A549 (cell line): ENCODE measurements at regions of chr17 and their contacts with region 1.

Region 1: DNA sequence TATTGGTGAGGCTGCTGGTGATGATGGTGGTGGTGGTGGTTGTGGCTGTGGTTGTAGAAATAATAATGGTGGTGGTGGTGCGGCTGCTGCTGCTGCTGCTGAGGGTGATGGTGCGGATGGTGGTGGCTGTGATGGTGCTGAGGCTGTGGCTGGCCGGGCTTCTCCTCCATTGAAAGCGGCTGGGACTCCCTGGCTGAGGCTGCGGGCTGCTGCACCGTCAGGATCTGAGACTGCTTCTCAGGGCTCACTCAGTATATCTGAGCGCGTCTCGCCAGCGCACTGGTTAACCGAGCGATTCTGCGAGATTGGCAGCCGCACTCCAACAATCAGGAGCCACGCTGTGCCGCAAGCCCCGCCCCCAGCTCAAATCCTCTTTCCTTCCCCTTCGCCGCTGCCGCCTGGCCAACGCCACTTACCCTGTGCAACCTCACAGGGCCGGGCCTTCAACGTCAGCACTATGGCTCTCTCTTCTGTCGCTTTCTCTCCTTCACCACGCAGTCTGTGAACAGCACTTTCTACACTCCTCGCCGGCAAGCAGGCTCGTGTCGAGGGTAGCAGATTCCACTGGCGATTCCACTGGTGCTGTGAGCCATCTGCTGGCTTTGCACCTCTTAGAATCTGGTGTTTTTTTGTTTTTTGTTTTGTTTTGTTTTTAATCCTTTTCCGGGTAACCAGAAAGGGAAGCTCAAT is at the start of gene NUFIP2:
- DNase-seq: peak; percentile 99 to 100
- ATAC-seq: peak; percentile 83 to 97
- H3K4me3 ChIP-seq: peak within 1 kb of the TSS; percentile 72
- H3K27ac ChIP-seq: peak within 1 kb of the TSS; percentile 91 to 98
- H3K4me1 ChIP-seq: peaks cover 25% of the 10 kb centered on the region
- CTCF ChIP-seq: no peak
- EP300 ChIP-seq: no peak
- POLR2A ChIP-seq: peak; percentile 99
- RAD21 ChIP-seq: 0 out of 5 replicates have a peak, but pooled peaks have one; percentile 3 to 15
- polyA plus RNA-seq, gene NUFIP2: 29.4 and 34.7 TPM in 2 replicates

Region 2: GRCh38 chr17:29124117-29124924 is 169.7 kb before region 1 on chr17:
- CTCF ChIA-PET with region 1: interaction called, 21 read pairs
- POLR2A ChIA-PET with region 1: interaction called, 11 read pairs
- DNase-seq: peak; percentile 82 to 83
- ATAC-seq: peak; percentile 83 to 93
- H3K4me3 ChIP-seq: no peak overlapping the region
- H3K27ac ChIP-seq: peak overlapping the region in 1 of 2 experiments; percentile 39; a peak in 3 of 6 replicates
- H3K4me1 ChIP-seq: peaks cover 16% of the 10 kb centered on the region
- CTCF ChIP-seq: peak; percentile 88
- EP300 ChIP-seq: no peak
- POLR2A ChIP-seq: no peak
- RAD21 ChIP-seq: peak; percentile 88 to 96

Region 3: DNA sequence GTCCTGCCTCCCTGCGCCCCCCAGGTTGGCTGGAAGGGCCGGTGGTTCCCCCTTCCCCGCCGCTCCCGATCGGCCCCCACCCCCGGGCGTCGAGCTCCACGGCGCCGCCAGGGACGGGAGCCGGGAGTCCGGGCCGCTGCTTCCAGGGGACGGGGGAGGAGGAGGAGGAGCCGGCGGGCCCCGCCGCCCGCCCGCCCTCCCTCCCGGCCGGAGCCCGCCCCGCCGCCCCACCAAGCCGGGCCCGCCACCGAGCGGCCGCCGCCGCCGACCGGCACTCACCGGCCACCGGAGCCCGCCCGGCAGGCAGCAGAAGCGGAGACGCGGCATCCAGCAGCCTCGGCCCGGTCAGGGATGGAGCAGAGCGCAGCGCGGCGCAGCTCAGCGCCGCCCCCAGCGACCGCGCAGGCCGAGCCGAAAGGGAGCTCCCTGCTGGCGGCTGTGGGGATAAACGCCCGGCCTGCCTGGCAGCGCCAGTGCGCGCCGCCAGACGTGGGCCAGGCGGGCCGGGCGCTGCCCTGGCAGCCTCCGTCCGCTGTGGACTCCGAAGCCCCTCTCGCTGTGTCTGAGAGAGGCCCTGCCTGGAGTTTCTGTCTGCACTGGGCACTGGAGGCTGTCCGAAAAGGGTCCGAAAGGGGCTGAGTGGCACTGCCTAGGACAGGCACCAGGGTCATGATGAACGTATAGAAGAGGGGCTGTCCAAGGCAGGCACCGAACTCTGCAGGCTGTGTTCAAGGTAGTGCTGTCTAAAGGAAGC is 113.8 kb before region 1 on chr17 and contains the start of gene MYO18A:
- CTCF ChIA-PET with region 1: interaction called, 9 read pairs
- POLR2A ChIA-PET with region 1: interaction called, 28 read pairs
- DNase-seq: peak; percentile 82 to 92
- ATAC-seq: peak; percentile 78 to 81
- H3K4me3 ChIP-seq: peak within 1 kb of the TSS; percentile 60
- H3K27ac ChIP-seq: peak within 1 kb of the TSS; percentile 81 to 95
- H3K4me1 ChIP-seq: peaks cover 38% of the 10 kb centered on the region
- CTCF ChIP-seq: peak; percentile 95
- EP300 ChIP-seq: 0 out of 5 replicates have a peak, but pooled peaks of 1 of the 2 experiments have one; percentile 5
- POLR2A ChIP-seq: peak; percentile 70
- RAD21 ChIP-seq: peak; percentile 45 to 75
- polyA plus RNA-seq, gene MYO18A: 12.3 and 26.3 TPM in 2 replicates

Region 4: DNA sequence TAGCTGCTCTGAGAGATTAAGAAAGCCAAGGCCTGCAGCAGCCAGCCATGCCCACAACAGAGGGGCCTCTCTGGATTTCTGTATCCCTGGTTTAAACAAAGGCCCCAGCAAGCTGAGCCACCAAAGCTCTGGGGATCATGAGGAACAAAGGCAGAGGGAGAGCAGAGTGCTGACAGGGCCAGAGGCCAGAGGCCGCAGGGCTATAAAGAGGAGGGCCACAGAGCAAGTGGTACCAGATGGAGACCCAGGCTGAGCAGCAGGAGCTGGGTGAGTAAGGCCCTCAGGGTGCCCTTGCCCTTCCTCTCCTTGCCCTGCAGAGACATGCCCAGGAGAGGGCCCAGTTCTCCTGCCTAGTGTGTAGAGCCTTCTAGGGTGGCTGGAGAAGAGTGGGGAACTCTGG is 47.4 kb before region 1 on chr17 and contains the start of gene CRYBA1:
- CTCF ChIA-PET with region 1: interaction called, 57 read pairs
- POLR2A ChIA-PET with region 1: interaction called, 17 read pairs
- DNase-seq: no peak
- ATAC-seq: peak; percentile 38 to 41; a peak in 4 of 6 replicates
- H3K4me3 ChIP-seq: no peak within 1 kb of the TSS
- H3K27ac ChIP-seq: peak within 1 kb of the TSS; percentile 12 to 73; a peak in 4 of 6 replicates
- H3K4me1 ChIP-seq: peaks cover 23% of the 10 kb centered on the region
- CTCF ChIP-seq: no peak
- EP300 ChIP-seq: no peak
- POLR2A ChIP-seq: no peak
- RAD21 ChIP-seq: no peak
- polyA plus RNA-seq, gene CRYBA1: 0.10 TPM in 1 of 2 replicates, not detected in the other

Region 5: DNA sequence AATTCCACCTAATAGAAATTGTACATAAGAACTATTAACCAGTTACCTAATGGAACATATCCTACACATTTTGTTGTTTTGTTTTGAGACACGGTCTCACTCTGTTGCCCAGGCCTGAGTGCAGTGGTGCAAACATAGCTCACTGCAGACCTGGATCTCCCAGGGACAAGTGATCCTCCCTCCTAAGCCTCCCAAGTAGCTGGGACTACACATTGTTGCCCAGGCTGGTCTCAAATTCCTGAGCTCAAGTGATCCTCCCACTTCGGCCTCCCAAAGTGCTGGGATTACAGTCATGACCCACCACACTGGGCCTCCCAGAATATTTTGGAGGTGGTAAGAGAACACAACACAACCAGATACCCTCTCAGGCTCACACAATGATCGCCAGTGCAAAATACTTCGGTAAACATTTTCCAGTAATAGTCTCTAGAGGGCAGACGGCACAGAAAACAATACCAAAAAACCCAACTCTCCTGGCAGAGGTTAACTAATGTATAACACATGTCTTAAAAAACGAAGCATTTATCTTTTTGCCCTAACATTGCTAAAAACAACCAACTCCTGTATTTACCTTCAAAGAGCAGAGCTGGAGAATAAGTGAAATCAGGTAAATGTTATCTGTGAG is 10.7 kb before region 1 on chr17:
- CTCF ChIA-PET with region 1: interaction called, 20 read pairs
- POLR2A ChIA-PET with region 1: interaction called, 6 read pairs
- DNase-seq: no peak
- ATAC-seq: peak; percentile 47 to 49; a peak in 3 of 6 replicates
- H3K4me3 ChIP-seq: no peak overlapping the region
- H3K27ac ChIP-seq: no peak overlapping the region
- H3K4me1 ChIP-seq: peaks cover 11% of the 10 kb centered on the region; the same call in 2 of the 3 replicates
- CTCF ChIP-seq: peak; percentile 17; the same call in 1 of the 3 replicates
- EP300 ChIP-seq: no peak
- POLR2A ChIP-seq: no peak
- RAD21 ChIP-seq: no peak

Region 6: GRCh38 chr17:29357821-29358232 is 63.8 kb after region 1 on chr17:
- CTCF ChIA-PET with region 1: no interaction called
- POLR2A ChIA-PET with region 1: interaction called, 12 read pairs
- DNase-seq: no peak
- ATAC-seq: peak in 1 of 2 experiments; percentile 34; a peak in 2 of 6 replicates
- H3K4me3 ChIP-seq: no peak overlapping the region
- H3K27ac ChIP-seq: peak overlapping the region; percentile 50 to 66
- H3K4me1 ChIP-seq: peaks cover 9% of the 10 kb centered on the region
- CTCF ChIP-seq: no peak
- EP300 ChIP-seq: no peak
- POLR2A ChIP-seq: no peak
- RAD21 ChIP-seq: no peak